BJ (cell line): ENCODE measurements at regions of chr3 and their contacts with region 1.

Region 1: GRCh38 chr3:133927540-133928066 is 31.9 kb upstream of the RAB6B start:
- DNase-seq: no peak
- H3K4me3 ChIP-seq: peak overlapping the region; percentile 34
- H3K27me3 ChIP-seq: peaks cover 2% of the 10 kb centered on the region; the same call in 1 of the 2 replicates
- CTCF ChIP-seq: peak; percentile 58

Region 2: DNA sequence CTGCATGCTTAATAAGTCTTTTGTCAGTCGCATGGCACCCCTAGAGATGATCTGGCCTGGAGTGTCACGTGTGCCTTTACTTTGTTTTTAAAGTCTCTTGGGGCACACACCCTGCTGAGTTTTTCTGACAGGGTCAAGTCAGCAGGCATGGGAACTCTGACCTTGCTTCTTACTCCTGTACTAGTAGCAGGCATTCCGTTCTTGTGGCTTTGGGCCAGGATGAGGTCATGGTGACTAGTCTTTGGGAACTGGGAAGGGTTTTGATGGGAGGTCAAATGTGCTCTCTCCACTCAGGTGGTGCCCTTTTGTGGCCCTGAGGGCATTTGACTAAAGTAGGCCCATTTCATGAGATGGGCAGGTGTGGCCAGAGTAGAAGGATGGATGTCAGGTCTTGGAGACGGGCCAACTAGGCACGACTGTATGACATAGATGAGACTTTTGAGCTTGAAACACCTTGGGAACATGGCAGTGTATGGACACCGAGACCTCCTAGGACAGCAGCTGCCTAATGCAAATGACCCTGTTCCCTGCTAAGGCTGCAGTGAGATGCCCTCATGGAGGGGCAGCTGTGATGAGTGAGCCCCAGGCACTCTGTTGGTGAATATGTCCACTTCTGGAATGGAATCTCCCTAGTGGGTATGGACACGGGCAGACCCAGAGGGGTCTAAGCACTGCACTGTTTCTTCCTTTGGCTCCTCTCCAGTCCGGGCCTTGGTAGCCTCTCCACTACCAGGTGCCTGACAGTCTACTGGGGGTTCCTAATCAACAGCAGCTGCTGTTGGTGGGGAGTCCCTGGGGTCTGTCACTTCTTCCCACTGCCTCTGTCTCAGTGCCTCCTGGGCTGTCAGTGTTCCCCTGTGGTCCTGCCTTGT is 105.6 kb before region 1 on chr3:
- CTCF ChIA-PET with region 1: interaction called, 17 read pairs
- POLR2A ChIA-PET with region 1: no interaction called
- DNase-seq: no peak
- H3K4me3 ChIP-seq: no peak overlapping the region
- H3K27me3 ChIP-seq: no peaks in the 10 kb centered on the region
- CTCF ChIP-seq: 0 out of 2 replicates have a peak, but pooled peaks have one; percentile 20

Region 3: DNA sequence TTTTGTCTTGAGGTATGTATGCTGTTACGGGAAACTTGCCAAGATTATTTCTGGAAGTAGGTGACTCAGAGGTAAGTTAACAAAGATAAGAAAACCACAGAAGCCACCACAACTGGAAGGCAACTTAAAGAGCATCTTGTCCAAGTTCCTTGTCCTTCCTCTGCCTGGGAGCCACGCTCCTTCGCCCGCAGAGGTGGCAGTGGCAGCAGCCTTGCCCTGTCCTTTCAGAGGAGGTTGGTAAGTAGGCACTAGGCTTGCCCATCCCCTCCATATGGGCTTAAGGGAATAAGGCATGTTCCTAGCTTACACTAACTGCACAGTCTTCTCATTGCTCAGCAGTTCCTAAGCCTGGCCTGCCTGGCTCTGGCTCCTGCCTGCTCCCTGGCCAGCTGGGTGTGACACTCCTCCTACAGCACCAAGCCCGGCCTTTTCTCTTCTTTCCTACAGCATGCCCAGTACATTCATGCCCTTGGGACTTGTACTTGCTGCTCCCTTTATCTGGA is 16.1 kb after region 1 on chr3:
- CTCF ChIA-PET with region 1: interaction called, 12 read pairs
- POLR2A ChIA-PET with region 1: no interaction called
- DNase-seq: no peak
- H3K4me3 ChIP-seq: no peak overlapping the region
- H3K27me3 ChIP-seq: peaks cover 7% of the 10 kb centered on the region
- CTCF ChIP-seq: no peak

Region 4: GRCh38 chr3:134066651-134067455 is 139.2 kb after region 1 on chr3:
- CTCF ChIA-PET with region 1: no interaction called
- POLR2A ChIA-PET with region 1: no interaction called
- DNase-seq: no peak
- H3K4me3 ChIP-seq: no peak overlapping the region
- H3K27me3 ChIP-seq: 0 out of 2 replicates have a peak, but pooled peaks cover 2% of the 10 kb centered on the region
- CTCF ChIP-seq: no peak

Region 5: DNA sequence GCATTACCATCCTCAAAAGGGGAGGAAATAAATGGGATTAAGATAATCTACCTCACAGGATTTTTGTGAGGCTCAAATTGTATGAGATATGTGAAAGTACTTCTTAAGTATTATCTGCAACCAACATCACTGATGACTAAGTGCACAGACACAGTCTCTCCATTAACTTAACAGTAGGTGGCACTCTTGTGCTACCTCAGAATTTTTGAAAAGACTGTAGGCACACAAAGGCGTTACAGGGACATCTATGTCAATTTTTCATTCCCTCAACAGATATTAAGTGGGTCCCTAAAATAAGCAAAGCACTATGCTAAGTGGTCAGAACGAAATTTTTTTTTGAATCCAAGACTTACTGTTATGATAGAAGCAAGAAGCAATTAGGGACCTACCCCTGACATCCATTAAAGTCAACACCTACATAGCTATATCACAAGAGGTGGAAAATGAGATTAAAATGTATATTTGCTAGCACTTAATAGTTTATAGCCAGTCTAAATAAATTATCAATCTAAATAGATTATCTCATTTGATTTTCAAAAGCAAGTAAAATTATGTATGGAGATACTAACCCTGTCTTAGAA is 270.2 kb after region 1 on chr3:
- CTCF ChIA-PET with region 1: interaction called, 10 read pairs
- POLR2A ChIA-PET with region 1: no interaction called
- DNase-seq: peak; percentile 32
- H3K4me3 ChIP-seq: no peak overlapping the region
- H3K27me3 ChIP-seq: no peaks in the 10 kb centered on the region
- CTCF ChIP-seq: peak; percentile 78